Calu3 (cell line): ENCODE measurements at regions of chr10 and their contacts with region 1.

Region 1: GRCh38 chr10:21278491-21279239 is 246.8 kb downstream of the SKIDA1 start:
- DNase-seq: peak; percentile 94
- H3K4me3 Mint-ChIP-seq: no peak overlapping the region
- H3K27ac Mint-ChIP-seq: no peak overlapping the region
- H3K4me1 Mint-ChIP-seq: peaks cover 28% of the 10 kb centered on the region
- H3K27me3 Mint-ChIP-seq: no peaks in the 10 kb centered on the region
- CTCF ChIP-seq: peak; percentile 93

Region 2: GRCh38 chr10:21953585-21954057 is 675.0 kb after region 1 on chr10:
- CTCF ChIA-PET with region 1: interaction called, 4 read pairs
- intact Hi-C with region 1: loop called (anchors 5 kb)
- DNase-seq: no peak
- H3K4me3 Mint-ChIP-seq: no peak overlapping the region
- H3K27ac Mint-ChIP-seq: no peak overlapping the region
- H3K4me1 Mint-ChIP-seq: no peaks in the 10 kb centered on the region
- H3K27me3 Mint-ChIP-seq: no peaks in the 10 kb centered on the region
- CTCF ChIP-seq: no peak